HepG2 (cell line): ENCODE measurements at regions of chr6 and their contacts with region 1.

Region 1: GRCh38 chr6:150865406-150866146 is at the start of gene MTHFD1L:
- DNase-seq: peak; percentile 73
- ATAC-seq: peak; percentile 71
- H3K4me3 ChIP-seq: peak within 1 kb of the TSS; percentile 72 to 90 (median 87)
- H3K27ac ChIP-seq: peak within 1 kb of the TSS; percentile 78
- H3K4me1 ChIP-seq: peaks cover 23% of the 10 kb centered on the region
- H3K27me3 ChIP-seq: no peaks in the 10 kb centered on the region; a peak in 1 of 5 replicates
- CTCF ChIP-seq: peak; percentile 85
- EP300 ChIP-seq: peak in 1 of 2 experiments; percentile 61; a peak in 1 of 4 replicates
- POLR2A ChIP-seq: peak; percentile 48 to 56; a peak in 2 of 4 replicates
- RAD21 ChIP-seq: peak; percentile 66
- total RNA-seq, gene MTHFD1L: 39.6 and 51.1 TPM in 2 replicates

Region 2: DNA sequence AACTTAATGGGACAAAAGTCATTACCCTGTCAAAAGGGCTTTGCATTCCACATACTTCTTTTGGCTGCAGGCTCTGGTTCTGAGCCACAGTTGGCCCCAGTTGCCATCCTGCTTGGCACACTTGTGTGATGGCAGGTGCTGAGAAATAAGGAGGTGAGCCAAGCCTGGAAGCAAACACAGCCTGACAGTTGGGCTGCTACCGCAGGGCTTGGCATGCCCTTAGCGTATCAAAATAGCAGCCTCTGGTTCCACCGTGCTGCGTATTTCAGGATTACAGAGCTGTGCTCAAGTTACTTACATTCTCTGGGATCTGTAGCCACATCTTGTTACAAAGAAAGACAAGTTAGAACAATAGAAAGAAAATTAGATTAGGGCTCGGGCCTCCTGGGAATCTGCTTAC is 11.0 kb after region 1 on chr6:
- CTCF ChIA-PET with region 1: no interaction called
- POLR2A ChIA-PET with region 1: interaction called, 24 read pairs
- in situ Hi-C with region 1: no loop called
- intact Hi-C with region 1: loop called (anchors 1 kb)
- DNase-seq: no peak
- ATAC-seq: no peak
- H3K4me3 ChIP-seq: no peak overlapping the region
- H3K27ac ChIP-seq: no peak overlapping the region
- H3K4me1 ChIP-seq: peaks cover 67% of the 10 kb centered on the region
- H3K27me3 ChIP-seq: no peaks in the 10 kb centered on the region
- CTCF ChIP-seq: no peak
- EP300 ChIP-seq: no peak
- POLR2A ChIP-seq: no peak
- RAD21 ChIP-seq: no peak

Region 3: GRCh38 chr6:150940941-150941340 is 75.4 kb after region 1 on chr6:
- CTCF ChIA-PET with region 1: no interaction called
- POLR2A ChIA-PET with region 1: no interaction called
- in situ Hi-C with region 1: no loop called
- intact Hi-C with region 1: no loop called
- DNase-seq: no peak
- ATAC-seq: no peak
- H3K4me3 ChIP-seq: no peak overlapping the region
- H3K27ac ChIP-seq: no peak overlapping the region
- H3K4me1 ChIP-seq: no peaks in the 10 kb centered on the region
- H3K27me3 ChIP-seq: no peaks in the 10 kb centered on the region
- CTCF ChIP-seq: no peak
- EP300 ChIP-seq: no peak
- POLR2A ChIP-seq: no peak
- RAD21 ChIP-seq: no peak

Region 4: DNA sequence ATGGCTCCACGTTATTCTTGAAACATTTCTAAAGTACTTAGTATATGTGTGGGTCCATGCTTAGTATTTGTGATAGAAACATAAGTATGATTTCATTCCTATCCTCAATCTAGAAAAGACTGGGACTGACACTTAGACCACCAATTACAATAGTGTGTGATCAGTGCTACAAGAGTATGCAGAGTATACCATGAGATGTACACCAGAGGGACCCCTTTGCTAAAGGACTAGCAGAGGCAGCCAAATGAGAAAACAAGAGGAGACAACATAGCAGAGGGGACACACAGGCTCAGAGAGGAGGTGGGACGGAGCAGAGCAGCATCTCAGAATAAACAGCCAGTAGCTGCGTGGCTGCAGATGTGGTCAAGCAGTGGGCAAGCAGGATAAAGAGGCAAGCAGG is 565.3 kb after region 1 on chr6:
- CTCF ChIA-PET with region 1: no interaction called
- POLR2A ChIA-PET with region 1: no interaction called
- in situ Hi-C with region 1: no loop called
- intact Hi-C with region 1: no loop called
- DNase-seq: peak; percentile 47
- ATAC-seq: peak; percentile 91
- H3K4me3 ChIP-seq: no peak overlapping the region
- H3K27ac ChIP-seq: no peak overlapping the region
- H3K4me1 ChIP-seq: peaks cover 2% of the 10 kb centered on the region; the same call in 1 of the 2 replicates
- H3K27me3 ChIP-seq: no peaks in the 10 kb centered on the region
- CTCF ChIP-seq: peak; percentile 64
- EP300 ChIP-seq: no peak
- POLR2A ChIP-seq: no peak
- RAD21 ChIP-seq: no peak